ENCODE measurements at regions of chr11 and their contacts with region 1.

Region 1: GRCh38 chr11:32198053-32198452 is 107.2 kb downstream of the RCN1 start:
- DNase-seq: no peak
- H3K4me3 Mint-ChIP-seq: no peak overlapping the region
- H3K27ac Mint-ChIP-seq: no peak overlapping the region
- H3K4me1 Mint-ChIP-seq: no peaks in the 10 kb centered on the region
- H3K27me3 Mint-ChIP-seq: peaks cover 36% of the 10 kb centered on the region
- CTCF ChIP-seq: no peak

Region 2: DNA sequence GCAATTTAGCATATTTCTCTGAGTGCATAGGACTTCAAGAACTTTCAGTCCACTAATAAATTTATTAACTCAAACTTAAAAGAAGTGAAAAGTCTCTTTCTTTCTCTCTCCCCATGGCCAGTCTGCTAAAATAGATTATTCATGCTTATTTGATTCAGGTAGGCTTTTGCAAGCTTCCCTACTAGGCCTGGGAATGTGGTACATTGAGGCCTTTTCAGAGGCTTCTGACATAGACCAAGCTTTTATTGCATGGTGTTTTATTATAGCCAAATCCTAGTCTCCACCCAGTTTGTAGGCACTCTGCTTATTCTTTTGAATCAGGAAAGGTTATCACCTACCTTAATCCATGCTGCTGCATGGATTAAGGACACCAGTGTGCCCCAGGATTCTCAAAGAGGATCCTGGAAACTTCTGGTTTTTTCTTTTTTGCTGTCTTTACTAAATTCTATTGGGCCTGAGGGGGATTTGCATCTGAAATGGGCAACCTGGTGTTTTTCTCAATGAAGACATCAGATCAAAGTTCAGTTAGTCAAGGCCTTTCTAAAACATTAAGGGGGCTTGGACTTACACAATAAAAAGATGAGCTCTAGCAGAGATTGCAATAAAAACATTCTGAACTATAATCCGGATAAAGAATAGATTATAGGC is 596.3 kb before region 1 on chr11:
- CTCF ChIA-PET with region 1: no interaction called
- POLR2A ChIA-PET with region 1: no interaction called
- intact Hi-C with region 1: no loop called
- DNase-seq: no peak
- H3K4me3 Mint-ChIP-seq: no peak overlapping the region
- H3K27ac Mint-ChIP-seq: no peak overlapping the region
- H3K4me1 Mint-ChIP-seq: no peaks in the 10 kb centered on the region
- H3K27me3 Mint-ChIP-seq: no peaks in the 10 kb centered on the region
- CTCF ChIP-seq: no peak

Region 3: DNA sequence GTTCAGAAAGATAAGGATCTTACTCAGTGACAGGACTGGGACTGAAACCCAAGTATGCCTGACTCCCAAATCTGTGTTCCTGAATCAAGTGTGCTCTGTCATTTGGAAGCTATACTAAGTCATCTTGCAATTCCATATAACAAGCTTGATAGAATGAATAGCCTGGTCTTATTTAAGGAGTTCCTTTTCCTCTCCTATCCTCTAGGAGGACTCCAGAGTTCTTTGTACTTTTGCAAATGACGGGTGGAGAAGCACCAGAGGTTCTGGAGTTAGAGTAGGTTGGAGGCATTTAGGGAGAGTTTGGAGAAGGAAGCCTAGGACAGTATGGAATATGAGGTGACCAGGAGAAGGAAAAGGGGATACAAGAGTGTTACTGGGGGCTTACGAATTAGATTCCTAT is 200.1 kb before region 1 on chr11:
- CTCF ChIA-PET with region 1: no interaction called
- POLR2A ChIA-PET with region 1: no interaction called
- intact Hi-C with region 1: no loop called
- DNase-seq: no peak
- H3K4me3 Mint-ChIP-seq: no peak overlapping the region
- H3K27ac Mint-ChIP-seq: no peak overlapping the region
- H3K4me1 Mint-ChIP-seq: peaks cover 16% of the 10 kb centered on the region
- H3K27me3 Mint-ChIP-seq: peaks cover 13% of the 10 kb centered on the region
- CTCF ChIP-seq: no peak

Region 4: DNA sequence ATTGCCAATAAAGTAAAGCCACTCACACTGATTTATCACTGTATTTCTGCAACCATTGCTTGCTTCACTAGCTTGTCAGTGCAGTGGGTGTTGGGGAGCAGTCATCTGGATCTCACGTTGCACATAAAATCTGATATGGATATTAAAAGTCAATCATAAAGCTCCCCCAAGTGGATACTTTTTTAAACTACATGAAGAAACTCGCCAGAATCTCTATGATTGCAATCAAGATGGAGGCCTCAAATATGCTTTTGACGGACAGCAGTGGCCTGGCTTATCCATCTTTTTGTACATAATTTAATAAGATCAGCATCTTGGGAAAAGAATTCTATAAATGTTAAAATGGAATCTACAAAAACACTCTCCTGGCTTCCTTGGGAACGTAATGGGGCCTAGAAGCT is 99.6 kb after region 1 on chr11:
- CTCF ChIA-PET with region 1: interaction called, 16 read pairs
- POLR2A ChIA-PET with region 1: no interaction called
- intact Hi-C with region 1: no loop called
- DNase-seq: peak; percentile 50
- H3K4me3 Mint-ChIP-seq: no peak overlapping the region
- H3K27ac Mint-ChIP-seq: no peak overlapping the region
- H3K4me1 Mint-ChIP-seq: no peaks in the 10 kb centered on the region
- H3K27me3 Mint-ChIP-seq: no peaks in the 10 kb centered on the region
- CTCF ChIP-seq: peak; percentile 39

Measured in MCF 10A (cell line).